ENCODE measurements at regions of chr11 and their contacts with region 1.

Region 1: GRCh38 chr11:78586452-78587046 is 11.9 kb upstream of the NARS2 start:
- DNase-seq: no peak
- H3K4me3 Mint-ChIP-seq: no peak overlapping the region
- H3K27ac Mint-ChIP-seq: no peak overlapping the region
- H3K4me1 Mint-ChIP-seq: no peaks in the 10 kb centered on the region
- H3K27me3 Mint-ChIP-seq: peaks cover 5% of the 10 kb centered on the region

Region 2: GRCh38 chr11:78476066-78476465 is 110.5 kb before region 1 on chr11:
- CTCF ChIA-PET with region 1: no interaction called
- POLR2A ChIA-PET with region 1: no interaction called
- intact Hi-C with region 1: no loop called
- DNase-seq: no peak
- H3K4me3 Mint-ChIP-seq: no peak overlapping the region
- H3K27ac Mint-ChIP-seq: no peak overlapping the region
- H3K4me1 Mint-ChIP-seq: no peaks in the 10 kb centered on the region
- H3K27me3 Mint-ChIP-seq: no peaks in the 10 kb centered on the region

Region 3: DNA sequence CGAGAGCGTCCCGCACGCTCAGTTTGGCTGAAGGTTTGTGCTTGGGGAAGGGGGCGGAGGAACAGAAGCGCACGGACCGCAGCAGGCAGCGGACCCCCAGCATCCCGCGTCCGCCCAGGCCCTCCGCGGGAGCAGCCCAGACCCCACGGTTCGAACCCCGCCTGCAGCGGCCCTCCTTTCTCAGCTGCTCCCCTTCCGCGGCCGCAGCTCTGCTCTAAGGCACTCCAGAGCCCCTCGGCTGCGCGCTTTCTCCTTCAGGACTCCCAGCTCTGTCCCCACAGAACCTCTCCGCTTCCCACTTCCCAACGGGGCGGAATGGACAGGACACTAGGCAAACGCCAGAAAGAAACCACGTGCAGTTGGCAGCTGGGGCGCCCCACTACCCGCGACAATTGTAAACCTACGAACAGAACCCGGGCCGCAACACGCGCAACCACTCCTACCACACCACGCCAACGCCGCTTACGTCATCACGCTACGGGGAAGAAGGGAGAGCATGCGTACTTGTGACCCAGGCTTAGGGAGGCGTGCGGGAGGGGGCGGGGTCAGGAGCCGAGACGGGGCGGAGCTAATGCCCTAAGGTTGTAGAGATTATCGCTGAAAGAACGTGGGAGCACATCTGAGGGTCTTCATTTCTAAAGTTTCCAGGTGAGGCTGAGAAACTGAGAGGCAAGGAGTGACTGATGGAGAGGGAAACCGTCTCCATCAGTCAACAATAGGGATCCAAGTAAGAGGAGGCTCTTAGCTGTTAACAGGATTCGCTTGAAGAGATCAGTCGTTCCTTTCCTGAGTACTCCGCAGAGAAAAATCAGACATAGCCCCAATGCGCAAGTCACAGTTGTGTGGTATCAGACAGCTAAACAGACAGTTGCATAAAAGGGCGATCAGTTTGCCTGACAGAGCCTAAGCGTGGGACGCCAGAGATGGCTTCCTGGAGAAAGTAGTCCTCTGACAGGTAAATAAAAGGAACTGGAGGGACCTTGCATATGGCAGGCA is 11.9 kb before region 1 on chr11 and contains the start of gene NARS2:
- CTCF ChIA-PET with region 1: interaction called, 8 read pairs
- POLR2A ChIA-PET with region 1: no interaction called
- intact Hi-C with region 1: loop called (anchors 1 kb)
- DNase-seq: peak; percentile 99
- H3K4me3 Mint-ChIP-seq: peak within 1 kb of the TSS; percentile 96
- H3K27ac Mint-ChIP-seq: peak within 1 kb of the TSS; percentile 92
- H3K4me1 Mint-ChIP-seq: peaks cover 21% of the 10 kb centered on the region
- H3K27me3 Mint-ChIP-seq: no peaks in the 10 kb centered on the region
- total RNA-seq, gene NARS2: 22.7 to 24.6 TPM

Measured in activated CD4-positive, alpha-beta memory T cell treated with anti-CD3 and anti-CD28 coated beads for 36 hours (primary cell).